IMR-90 (cell line): ENCODE measurements at regions of chr11 and their contacts with region 1.

Region 1: DNA sequence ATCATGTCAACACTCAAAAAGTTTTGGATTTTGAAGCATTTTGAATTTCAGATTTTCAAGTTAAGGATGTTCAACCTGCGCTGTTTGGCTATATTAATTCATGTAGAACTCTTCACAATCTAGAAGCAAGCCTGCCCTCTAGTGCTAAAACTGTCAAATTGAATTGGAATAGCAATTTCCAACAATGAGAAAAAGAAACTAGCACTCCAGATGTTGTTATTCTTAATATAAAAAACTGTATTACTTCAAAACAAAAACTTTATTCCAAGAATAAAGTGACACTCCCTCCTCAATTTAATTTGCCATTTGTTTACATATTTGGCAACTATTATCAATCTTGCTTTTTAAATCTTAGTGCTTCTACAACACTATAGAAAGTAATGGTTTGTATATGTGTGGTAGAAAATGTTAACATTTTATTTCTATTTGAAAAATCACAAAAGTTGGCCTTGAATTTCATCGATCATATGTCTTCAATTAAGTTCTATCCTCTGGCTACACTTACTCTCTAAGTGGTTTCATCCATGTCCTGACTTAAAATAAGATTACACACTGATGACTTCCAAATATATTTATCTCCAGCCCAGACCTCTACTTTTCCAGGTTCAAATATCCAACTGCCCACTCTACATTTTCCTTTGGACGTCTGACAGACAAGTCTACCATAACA is 36.6 kb downstream of the DCUN1D5 start:
- DNase-seq: peak; percentile 65
- ATAC-seq: peak; percentile 52
- H3K4me3 ChIP-seq: no peak overlapping the region
- H3K27ac ChIP-seq: no peak overlapping the region
- H3K4me1 ChIP-seq: no peaks in the 10 kb centered on the region
- H3K27me3 ChIP-seq: no peaks in the 10 kb centered on the region
- CTCF ChIP-seq: peak; percentile 78
- POLR2A ChIP-seq: no peak
- RAD21 ChIP-seq: peak; percentile 79

Region 2: DNA sequence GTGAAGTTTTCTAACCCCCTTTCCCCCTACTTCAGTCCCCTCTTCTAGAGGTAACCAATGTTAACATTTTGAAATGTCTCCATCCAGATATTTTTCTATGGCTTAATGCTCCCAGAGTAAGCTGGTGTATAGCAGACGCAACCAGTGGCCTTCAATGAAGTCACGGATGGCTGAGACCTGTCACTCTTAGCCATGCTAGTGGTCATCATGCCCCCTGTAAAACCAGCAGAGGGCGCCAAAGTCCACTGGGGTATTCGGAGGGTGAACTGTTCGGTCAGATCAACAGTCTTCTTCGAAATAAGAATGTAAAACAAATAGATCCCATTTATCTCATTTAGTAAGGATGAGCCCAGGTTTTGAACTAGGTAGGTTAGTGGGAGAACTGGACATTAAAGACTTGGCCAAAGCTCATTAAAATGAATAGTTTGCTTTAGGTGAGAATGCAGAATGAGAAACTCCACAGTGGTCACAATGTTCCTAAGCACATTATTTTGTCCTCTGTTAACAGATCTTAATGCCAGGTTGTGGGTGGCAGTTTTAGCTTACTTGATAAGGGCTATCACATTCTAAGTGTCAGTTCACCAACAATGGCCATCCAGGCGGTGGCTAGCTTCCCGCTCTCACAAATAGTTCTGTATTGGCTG is 322.0 kb before region 1 on chr11:
- CTCF ChIA-PET with region 1: no interaction called
- POLR2A ChIA-PET with region 1: no interaction called
- dilution Hi-C with region 1: no loop called
- in situ Hi-C with region 1: no loop called
- intact Hi-C with region 1: loop called (anchors 1 kb)
- DNase-seq: peak; percentile 47
- ATAC-seq: peak; percentile 73
- H3K4me3 ChIP-seq: no peak overlapping the region
- H3K27ac ChIP-seq: no peak overlapping the region
- H3K4me1 ChIP-seq: peaks cover 8% of the 10 kb centered on the region
- H3K27me3 ChIP-seq: peaks cover 16% of the 10 kb centered on the region
- CTCF ChIP-seq: peak; percentile 71
- POLR2A ChIP-seq: no peak
- RAD21 ChIP-seq: peak; percentile 80

Region 3: DNA sequence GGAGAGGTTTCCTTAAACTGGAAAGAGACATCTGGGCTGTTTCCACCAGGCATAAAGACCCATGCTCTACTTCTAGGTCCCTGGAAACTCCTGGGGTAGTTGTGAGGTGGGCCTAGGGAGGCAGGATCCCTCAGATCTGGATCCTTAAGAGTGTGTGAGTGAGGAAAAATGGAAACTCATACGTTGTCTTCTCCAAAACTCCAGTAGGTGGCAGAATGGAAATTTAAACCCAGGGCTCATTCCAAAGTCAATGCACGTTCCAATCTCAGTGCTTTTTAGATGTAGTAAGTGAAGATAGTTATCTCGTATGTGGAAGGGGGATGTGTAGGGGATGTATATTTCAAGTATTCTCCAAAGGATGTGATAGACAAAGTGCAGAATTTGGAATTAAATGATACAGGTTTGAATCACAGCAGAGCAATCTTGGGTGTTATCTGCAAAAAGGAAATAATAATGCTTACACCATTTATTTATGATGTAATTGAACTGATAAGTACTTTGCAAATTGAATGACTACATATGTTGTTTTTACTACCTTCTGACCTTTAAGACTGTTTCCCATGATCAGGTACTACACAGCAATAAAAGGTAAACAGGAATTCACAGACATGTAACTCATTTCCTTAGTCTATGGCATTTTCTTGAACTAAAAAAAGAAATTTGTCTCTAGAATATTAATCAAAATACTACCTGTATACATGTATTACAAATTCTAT is 244.3 kb before region 1 on chr11:
- CTCF ChIA-PET with region 1: no interaction called
- POLR2A ChIA-PET with region 1: no interaction called
- dilution Hi-C with region 1: no loop called
- in situ Hi-C with region 1: loop called (anchors 10 kb)
- intact Hi-C with region 1: loop called (anchors 5 kb)
- DNase-seq: peak; percentile 45
- ATAC-seq: peak; percentile 89
- H3K4me3 ChIP-seq: no peak overlapping the region
- H3K27ac ChIP-seq: no peak overlapping the region
- H3K4me1 ChIP-seq: no peaks in the 10 kb centered on the region
- H3K27me3 ChIP-seq: peaks cover 3% of the 10 kb centered on the region
- CTCF ChIP-seq: peak; percentile 53
- POLR2A ChIP-seq: no peak
- RAD21 ChIP-seq: peak; percentile 52

Region 4: GRCh38 chr11:102940714-102941588 is 114.4 kb before region 1 on chr11:
- CTCF ChIA-PET with region 1: no interaction called
- POLR2A ChIA-PET with region 1: no interaction called
- dilution Hi-C with region 1: no loop called
- in situ Hi-C with region 1: no loop called
- intact Hi-C with region 1: loop called (anchors 10 kb)
- DNase-seq: peak; percentile 73
- ATAC-seq: peak; percentile 88
- H3K4me3 ChIP-seq: no peak overlapping the region
- H3K27ac ChIP-seq: no peak overlapping the region
- H3K4me1 ChIP-seq: no peaks in the 10 kb centered on the region
- H3K27me3 ChIP-seq: peaks cover 1% of the 10 kb centered on the region
- CTCF ChIP-seq: peak; percentile 80
- POLR2A ChIP-seq: no peak
- RAD21 ChIP-seq: peak; percentile 80

Region 5: DNA sequence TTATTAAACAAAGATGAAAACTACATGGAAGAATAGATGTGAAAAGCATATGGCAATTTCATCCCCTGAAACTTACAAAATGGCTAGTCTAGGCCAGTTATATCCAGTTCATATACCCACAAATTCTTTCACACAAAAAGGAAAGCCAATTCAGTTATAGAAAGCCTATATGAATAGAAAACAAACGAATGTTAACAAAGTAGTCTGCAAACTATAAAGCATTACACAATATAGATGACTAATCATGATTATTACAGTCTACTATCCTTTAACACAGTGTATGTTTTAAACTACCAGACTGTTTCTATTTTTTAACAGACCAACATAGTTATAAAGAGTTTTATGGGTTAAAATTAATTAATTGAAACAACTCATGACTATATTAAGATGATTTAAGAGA is 24.5 kb after region 1 on chr11:
- CTCF ChIA-PET with region 1: no interaction called
- POLR2A ChIA-PET with region 1: no interaction called
- dilution Hi-C with region 1: no loop called
- in situ Hi-C with region 1: no loop called
- intact Hi-C with region 1: no loop called
- DNase-seq: peak; percentile 58
- ATAC-seq: peak; percentile 81
- H3K4me3 ChIP-seq: no peak overlapping the region
- H3K27ac ChIP-seq: no peak overlapping the region
- H3K4me1 ChIP-seq: no peaks in the 10 kb centered on the region
- H3K27me3 ChIP-seq: no peaks in the 10 kb centered on the region
- CTCF ChIP-seq: no peak
- POLR2A ChIP-seq: no peak
- RAD21 ChIP-seq: no peak